OCI-LY7 (cell line): ENCODE measurements at regions of chr17 and their contacts with region 1.

Region 1: GRCh38 chr17:76264755-76265596 is at the start of gene UBALD2:
- DNase-seq: peak; percentile 100
- H3K4me3 ChIP-seq: peak within 1 kb of the TSS; percentile 89
- H3K27ac ChIP-seq: peak within 1 kb of the TSS; percentile 90
- H3K4me1 ChIP-seq: peaks cover 83% of the 10 kb centered on the region
- CTCF ChIP-seq: no peak
- total RNA-seq, gene UBALD2: 70.9 and 86.4 TPM in 2 replicates

Region 2: GRCh38 chr17:75667021-75667790 is 597.8 kb before region 1 on chr17 and contains the starts of genes RECQL5 and SAP30BP:
- CTCF ChIA-PET with region 1: no interaction called
- POLR2A ChIA-PET with region 1: no interaction called
- intact Hi-C with region 1: loop called (anchors 10 kb)
- DNase-seq: peak; percentile 100
- H3K4me3 ChIP-seq: peak within 1 kb of the TSS; percentile 84
- H3K27ac ChIP-seq: peak within 1 kb of the TSS; percentile 94
- H3K4me1 ChIP-seq: peaks cover 54% of the 10 kb centered on the region
- CTCF ChIP-seq: no peak
- total RNA-seq, gene RECQL5: 90.0 and 91.9 TPM in 2 replicates
- total RNA-seq, gene SAP30BP: 122 and 127 TPM in 2 replicates

Region 3: DNA sequence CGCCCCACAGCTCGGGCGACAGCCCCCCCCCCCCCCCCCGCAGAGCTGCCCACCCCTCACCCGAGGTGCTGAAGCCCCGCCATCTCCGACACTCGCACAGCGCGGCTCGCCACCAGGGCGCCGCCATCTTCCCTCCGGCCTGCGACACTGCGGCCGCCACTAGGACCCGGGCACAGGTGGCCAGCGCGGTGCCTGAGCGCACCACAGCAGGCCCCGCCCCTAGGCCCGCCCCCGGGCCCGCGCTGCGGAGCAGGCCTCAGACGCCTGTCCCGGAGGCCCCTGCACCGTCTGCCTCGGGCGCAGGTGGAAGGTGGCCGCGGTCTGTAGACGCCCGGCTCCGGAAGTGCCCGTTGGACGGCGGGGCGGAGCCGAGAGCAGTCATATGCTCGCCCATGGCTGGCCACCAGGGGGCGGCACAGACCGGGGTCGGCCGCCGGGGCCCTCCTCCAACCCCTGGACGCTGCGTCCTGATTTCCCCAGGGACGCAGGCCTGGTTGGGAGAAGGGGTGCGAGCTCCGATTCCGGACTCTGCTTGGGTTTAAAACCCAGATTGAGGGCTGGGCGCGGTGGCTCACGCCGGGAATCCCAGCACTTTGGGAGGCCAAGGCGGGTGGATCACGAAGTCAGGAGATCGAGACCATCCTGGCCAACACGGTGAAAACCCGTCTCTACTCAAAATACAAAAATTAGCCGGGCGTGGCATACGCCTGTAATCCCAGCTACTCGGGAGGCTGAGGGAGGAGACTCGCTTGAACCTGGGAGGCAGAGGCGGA is 360.0 kb before region 1 on chr17 and contains the start of gene MRPL38:
- CTCF ChIA-PET with region 1: no interaction called
- POLR2A ChIA-PET with region 1: interaction called, 3 read pairs
- intact Hi-C with region 1: loop called (anchors 10 kb)
- DNase-seq: peak; percentile 99
- H3K4me3 ChIP-seq: peak within 1 kb of the TSS; percentile 76
- H3K27ac ChIP-seq: peak within 1 kb of the TSS; percentile 38
- H3K4me1 ChIP-seq: peaks cover 37% of the 10 kb centered on the region
- CTCF ChIP-seq: peak; percentile 95
- total RNA-seq, gene MRPL38: 91.9 and 112 TPM in 2 replicates

Region 4: DNA sequence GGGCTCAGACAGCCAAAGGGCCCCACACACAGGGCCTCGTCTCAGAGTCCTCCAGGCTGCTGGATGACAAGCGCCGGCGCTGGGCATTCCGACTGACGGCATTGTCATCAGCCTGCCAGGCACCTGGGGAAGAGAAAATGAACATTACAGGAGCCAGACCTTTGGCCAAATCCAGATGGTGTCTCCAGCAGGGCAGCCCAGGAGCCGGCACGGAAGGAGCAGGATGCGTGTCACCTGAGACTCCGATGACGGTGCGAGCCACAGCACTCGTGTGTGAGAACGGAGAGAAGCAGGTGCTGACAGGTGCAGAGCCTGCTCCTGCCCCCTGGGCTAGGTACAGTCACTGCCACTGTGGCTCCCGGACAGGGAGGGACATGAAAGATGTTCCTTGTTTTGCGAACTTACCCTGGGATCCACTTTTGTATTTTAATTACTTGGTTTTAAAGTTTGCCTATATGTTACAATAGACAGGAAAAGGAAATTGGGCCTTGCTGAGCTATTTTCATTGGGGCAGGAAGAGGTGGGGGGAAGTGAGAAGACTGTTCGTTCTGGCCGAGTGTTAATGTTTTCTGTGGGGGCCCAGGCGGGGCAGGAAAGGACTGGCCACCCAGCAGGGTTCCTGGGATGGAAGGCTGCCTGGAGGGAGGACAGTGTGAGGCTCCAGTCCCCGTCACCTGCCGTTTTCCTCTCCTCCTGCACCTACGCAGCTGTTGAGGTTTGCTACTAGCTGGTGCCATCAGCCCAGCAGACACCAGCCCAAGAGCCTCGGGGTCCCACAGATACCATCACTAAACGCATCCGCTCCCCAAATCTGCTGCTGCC is 119.5 kb before region 1 on chr17:
- CTCF ChIA-PET with region 1: interaction called, 3 read pairs
- POLR2A ChIA-PET with region 1: interaction called, 14 read pairs
- intact Hi-C with region 1: no loop called
- DNase-seq: peak; percentile 80
- H3K4me3 ChIP-seq: peak overlapping the region; percentile 48
- H3K27ac ChIP-seq: peak overlapping the region; percentile 70
- H3K4me1 ChIP-seq: peaks cover 66% of the 10 kb centered on the region
- CTCF ChIP-seq: no peak

Region 5: DNA sequence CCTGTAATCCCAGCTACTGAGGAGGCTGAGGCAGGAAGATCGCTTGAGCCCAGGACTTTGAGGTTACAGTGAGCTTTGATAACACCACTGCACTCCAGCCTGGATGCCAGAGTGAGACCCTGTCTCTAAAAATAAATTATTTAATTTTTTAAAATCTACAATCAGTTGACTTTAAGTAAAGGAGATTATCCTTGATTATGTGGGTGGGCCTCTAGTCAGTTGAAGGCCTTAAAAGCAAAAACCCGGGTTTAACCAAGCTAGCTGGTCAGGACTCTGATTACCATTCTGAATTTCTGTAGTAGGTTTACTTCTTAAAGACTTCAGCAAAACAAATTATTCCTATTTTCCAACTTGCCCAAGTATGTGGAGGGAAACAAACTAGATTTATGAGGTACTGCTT is 29.1 kb before region 1 on chr17:
- CTCF ChIA-PET with region 1: no interaction called
- POLR2A ChIA-PET with region 1: interaction called, 13 read pairs
- intact Hi-C with region 1: no loop called
- DNase-seq: no peak
- H3K4me3 ChIP-seq: no peak overlapping the region
- H3K27ac ChIP-seq: no peak overlapping the region
- H3K4me1 ChIP-seq: no peaks in the 10 kb centered on the region
- CTCF ChIP-seq: no peak

Region 6: GRCh38 chr17:76296186-76296585 is 31.2 kb after region 1 on chr17:
- CTCF ChIA-PET with region 1: no interaction called
- POLR2A ChIA-PET with region 1: no interaction called
- intact Hi-C with region 1: no loop called
- DNase-seq: no peak
- H3K4me3 ChIP-seq: no peak overlapping the region
- H3K27ac ChIP-seq: no peak overlapping the region
- H3K4me1 ChIP-seq: no peaks in the 10 kb centered on the region
- CTCF ChIP-seq: no peak

Region 7: DNA sequence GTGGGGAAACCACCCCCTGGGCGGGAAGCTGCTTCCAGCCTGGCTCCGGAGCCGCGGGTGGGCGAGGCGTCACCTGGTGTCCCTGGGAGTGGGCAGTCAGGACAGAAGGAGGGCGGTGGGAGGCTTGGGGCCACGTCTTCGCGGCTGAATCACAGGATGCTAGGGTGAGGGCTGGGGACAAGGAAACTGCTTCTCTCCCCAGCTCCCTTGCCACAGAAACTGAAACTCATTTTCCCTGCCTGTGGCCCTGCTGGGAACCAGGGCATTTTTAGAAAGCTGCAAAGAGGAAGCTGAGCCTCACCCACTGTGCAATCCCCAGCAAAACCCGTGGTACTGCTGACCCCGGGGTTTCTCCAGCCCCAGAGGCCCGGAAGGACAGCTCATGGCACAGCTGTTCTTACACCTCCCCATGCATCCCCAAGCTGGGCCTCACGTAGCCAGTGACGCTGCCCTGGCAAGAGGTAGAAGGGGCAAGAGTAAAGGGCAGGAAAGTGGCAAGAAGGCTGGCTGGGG is 228.1 kb after region 1 on chr17:
- CTCF ChIA-PET with region 1: no interaction called
- POLR2A ChIA-PET with region 1: interaction called, 3 read pairs
- intact Hi-C with region 1: loop called (anchors 10 kb)
- DNase-seq: peak; percentile 81
- H3K4me3 ChIP-seq: peak overlapping the region; percentile 41
- H3K27ac ChIP-seq: peak overlapping the region; percentile 83
- H3K4me1 ChIP-seq: peaks cover 85% of the 10 kb centered on the region
- CTCF ChIP-seq: no peak

Region 8: DNA sequence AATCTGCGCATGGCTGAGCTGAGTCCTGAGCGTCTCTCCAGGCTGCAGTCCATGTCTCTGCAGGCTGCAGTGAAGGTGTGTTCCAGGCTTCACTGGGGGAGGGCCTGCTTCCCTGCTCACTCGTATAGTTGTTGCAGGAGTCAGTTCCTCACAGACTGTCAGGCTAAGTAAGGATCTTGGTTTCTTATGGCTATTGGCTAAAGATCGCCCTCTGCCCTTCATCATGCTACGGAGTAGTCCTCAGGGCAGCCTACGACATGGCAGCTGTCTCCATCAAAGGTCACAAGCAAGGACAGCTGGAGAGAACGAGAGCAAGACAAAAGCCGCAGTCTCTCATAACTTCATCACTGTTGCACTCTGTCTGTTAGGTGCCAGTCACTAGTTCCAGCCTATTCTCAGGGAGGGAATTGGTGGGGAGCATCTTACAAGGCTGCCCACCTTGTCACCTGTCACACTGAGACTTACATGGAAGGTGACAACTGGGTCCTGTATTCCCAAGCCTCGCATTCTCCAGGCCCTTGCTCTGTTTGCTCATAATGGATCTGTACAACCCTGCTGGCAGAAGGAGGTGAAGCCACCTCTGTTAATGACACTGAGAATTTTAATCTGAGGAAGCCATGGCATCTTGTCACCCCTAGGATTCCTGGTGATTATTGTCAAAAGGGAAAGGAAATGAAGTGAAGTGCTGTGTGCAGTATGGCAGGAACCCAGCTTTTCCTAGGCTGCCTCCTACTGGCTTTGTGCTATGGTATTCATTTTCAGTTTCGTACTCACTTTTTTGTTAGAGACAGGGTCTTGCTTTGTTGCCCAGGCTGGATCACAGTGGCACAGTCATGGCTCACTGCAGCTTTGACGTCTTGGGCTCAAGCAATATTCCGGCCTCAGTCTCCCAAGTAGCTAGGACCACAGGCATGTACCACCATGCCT is 516.3 kb after region 1 on chr17:
- CTCF ChIA-PET with region 1: no interaction called
- POLR2A ChIA-PET with region 1: no interaction called
- intact Hi-C with region 1: loop called (anchors 5 kb)
- DNase-seq: peak; percentile 55
- H3K4me3 ChIP-seq: no peak overlapping the region
- H3K27ac ChIP-seq: peak overlapping the region; percentile 92
- H3K4me1 ChIP-seq: peaks cover 79% of the 10 kb centered on the region
- CTCF ChIP-seq: peak; percentile 65; the same call in 1 of the 2 replicates